Left ventricle myocardium superior (tissue), 1 donor: ENCODE measurements at regions of chr10 and their contacts with region 1.

Region 1: GRCh38 chr10:21078410-21079329 is 181.6 kb upstream of the NEBL start:
- DNase-seq: peak; percentile 63
- ATAC-seq: peak; percentile 81

Region 2: DNA sequence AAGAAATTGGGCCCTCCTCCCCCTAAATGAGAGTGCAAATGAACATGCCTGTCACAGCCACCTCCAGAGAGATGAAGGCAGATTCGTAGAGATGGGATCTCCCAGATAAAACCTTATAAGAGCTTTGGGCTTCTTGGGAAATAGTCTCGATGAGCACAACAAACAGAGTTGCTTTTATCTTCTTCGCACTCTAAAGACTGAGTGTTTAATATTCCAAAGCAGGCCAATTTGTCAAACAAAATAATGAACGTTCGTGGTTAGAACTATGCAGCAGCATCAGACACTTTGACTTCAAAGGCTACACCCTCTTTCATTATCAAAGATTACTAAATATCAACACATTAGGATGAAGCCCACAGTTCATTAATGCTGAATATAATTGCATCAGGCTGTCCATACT is 190.6 kb after region 1 on chr10:
- intact Hi-C with region 1: loop called (anchors 2 kb)
- DNase-seq: no peak
- ATAC-seq: no peak

Region 3: DNA sequence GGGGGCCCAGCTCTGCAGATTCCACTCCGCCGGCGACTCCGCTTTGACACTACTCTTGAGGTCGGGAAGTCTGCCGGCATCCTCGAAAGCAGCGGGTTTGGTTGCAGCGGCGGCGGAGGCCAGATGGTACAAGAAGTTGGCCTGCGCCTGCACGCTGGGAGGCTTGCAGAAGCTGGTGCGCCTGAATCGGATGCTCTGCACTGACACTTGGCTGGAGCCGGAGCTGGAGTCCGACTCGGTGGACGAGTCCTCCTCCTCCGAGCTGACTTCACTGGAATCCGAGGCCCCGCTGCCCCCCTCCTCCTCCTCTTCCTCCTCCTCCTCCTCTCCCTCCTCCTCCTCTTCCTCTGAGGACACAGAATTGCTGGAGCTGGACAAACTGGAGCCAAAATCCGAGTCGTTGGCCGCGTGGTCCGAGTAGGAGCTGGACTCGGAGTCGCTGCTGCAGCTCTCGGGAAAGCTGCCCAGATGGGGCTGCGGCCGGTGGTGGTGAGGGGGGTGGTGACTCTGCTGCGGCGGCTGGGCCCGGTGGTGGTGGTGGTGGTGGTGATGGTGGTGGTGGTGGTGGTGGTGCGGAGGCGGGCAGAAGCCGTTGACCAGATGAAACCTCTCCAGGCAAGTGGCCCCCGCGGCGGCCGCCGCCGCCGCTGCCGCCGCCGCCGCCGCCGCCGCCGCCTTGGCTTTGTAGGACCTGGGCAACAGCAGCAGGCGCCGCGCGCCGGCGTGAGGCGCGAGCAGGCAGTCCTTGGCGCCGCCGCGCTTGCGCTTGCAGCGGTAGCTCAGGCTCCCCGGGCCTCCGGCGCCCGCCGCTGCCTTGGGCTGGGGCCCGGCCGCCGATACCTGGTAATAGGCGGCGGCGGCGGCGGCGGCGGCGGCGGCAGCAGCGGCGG is 437.8 kb after region 1 on chr10:
- intact Hi-C with region 1: loop called (anchors 10 kb)
- DNase-seq: peak; percentile 81
- ATAC-seq: peak; percentile 41

Region 4: GRCh38 chr10:21732067-21732772 is 653.5 kb after region 1 on chr10:
- intact Hi-C with region 1: loop called (anchors 10 kb)
- DNase-seq: peak; percentile 70
- ATAC-seq: peak; percentile 95